Colonic mucosa (tissue), 4 donors: ENCODE measurements at regions of chr17 and their contacts with region 1.

Region 1: DNA sequence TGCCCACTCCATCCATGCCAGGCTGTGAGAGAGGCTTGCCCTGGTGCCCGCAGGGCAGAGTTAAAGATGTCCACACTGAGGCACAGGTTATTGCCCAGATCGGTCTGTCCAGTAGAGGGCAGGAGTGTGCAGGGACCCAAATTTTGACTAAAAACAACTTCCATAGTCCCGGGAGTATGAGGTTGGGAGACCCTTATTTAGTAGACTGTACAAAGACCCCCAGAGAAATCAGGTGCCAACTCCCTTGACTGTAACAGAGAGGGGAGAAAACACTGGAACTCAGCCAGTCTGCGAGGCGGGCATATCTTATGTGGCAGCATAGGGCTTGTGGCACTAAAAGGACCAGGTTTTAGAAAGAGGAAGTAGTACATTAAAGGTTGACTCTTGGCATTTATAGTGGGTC is 43.4 kb downstream of the HNF1B start:
- DNase-seq: peak; percentile 80
- H3K4me3 ChIP-seq: no peak overlapping the region
- H3K27ac ChIP-seq: no peak overlapping the region
- H3K4me1 ChIP-seq: no peaks in the 10 kb centered on the region
- H3K27me3 ChIP-seq: no peaks in the 10 kb centered on the region
- CTCF ChIP-seq: peak; percentile 61

Region 2: GRCh38 chr17:37770631-37771518 is 69.4 kb after region 1 on chr17:
- intact Hi-C with region 1: loop called (anchors 5 kb)
- DNase-seq: peak; percentile 88
- H3K4me3 ChIP-seq: no peak overlapping the region
- H3K27ac ChIP-seq: no peak overlapping the region
- H3K4me1 ChIP-seq: no peaks in the 10 kb centered on the region
- H3K27me3 ChIP-seq: no peaks in the 10 kb centered on the region
- CTCF ChIP-seq: peak; percentile 82

Region 3: DNA sequence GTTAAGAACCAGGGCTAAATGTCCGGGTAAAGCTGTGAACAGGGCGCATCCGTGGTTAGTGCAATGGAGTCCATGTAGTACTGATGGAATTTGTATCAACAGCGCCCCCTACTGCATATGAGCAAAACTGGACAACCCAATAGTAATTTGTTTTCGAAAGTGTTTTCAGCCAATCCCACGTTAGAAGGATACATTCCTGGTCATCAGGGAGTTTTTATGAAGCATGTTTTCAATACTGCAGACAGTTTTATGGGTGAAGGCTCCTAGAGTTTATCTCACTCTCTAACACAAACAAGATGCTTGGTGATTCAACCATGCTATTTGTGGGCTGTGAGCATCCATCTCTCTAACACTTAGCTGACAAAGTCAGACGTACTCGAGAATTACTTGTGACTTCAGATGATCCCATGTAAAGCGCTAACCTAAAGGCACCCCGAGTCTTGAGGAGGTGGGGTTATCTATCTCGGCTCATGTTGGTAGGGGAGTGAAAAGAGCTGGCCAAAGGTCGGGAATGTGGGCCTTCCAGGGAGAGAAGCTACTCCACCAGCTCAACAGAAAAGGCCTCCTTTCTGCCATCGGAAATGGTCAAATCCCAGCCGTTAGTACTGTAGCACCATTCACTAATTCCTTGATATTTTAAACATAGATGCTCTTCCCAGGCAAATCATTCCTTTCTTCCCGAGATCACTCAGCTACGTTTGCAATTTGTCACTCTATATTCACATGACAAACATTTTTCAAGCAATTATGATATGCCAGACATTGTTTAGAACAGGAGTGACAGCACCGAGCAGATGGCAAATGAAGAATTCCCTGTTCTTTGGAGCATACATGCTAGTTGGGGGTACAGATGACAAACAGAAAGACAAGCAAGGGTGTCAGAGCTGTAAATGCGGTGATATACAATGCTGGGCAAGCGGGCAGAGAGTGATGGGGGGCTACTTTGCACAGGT is 90.2 kb after region 1 on chr17:
- intact Hi-C with region 1: loop called (anchors 5 kb)
- DNase-seq: peak; percentile 73
- H3K4me3 ChIP-seq: no peak overlapping the region
- H3K27ac ChIP-seq: no peak overlapping the region
- H3K4me1 ChIP-seq: peaks cover 9% of the 10 kb centered on the region
- H3K27me3 ChIP-seq: no peaks in the 10 kb centered on the region
- CTCF ChIP-seq: peak; percentile 57